ENCODE measurements at regions of chr1 and their contacts with region 1.

Region 1: DNA sequence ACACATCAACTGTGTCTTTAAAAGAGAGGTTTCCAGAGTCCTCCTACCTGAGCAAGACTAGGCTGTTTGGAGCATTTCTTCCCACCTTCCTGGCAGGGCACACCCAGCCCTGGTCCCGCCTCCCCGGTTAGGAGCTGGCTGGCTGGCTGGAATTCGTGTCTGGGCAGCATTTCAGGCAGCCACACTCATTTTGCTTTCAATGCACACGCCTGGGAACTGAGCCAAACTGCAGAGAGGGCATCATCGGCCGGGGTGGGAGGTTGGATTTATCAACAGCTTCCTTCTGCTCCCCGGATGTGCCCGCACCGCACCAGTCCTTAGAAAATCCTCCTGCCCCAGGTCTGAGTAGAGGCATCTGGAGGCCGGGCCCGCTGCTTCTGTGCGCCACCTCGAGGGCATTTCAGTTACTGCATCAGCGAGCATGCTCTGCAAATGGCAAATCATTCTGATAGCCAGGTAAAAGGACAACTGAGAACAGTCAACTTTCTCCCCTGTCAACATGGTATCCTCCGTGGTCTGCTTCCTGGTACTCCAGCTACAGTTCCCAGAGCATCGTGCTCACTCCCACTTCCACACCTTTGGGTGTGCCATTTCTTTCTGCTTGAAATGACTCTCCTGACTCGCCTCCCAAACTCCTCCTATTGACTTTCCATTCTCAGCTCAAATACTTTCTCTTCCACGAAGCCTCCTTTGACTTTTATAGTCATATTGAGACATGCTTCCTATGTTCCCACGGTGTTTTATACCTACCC is 20.6 kb downstream of the TCEA3 start:
- DNase-seq: peak; percentile 100
- H3K4me3 Mint-ChIP-seq: peak overlapping the region; percentile 63
- H3K27ac Mint-ChIP-seq: peak overlapping the region; percentile 64
- H3K4me1 Mint-ChIP-seq: peaks cover 31% of the 10 kb centered on the region
- H3K27me3 Mint-ChIP-seq: no peaks in the 10 kb centered on the region
- CTCF ChIP-seq: peak; percentile 90

Region 2: GRCh38 chr1:23098463-23099170 is 305.3 kb before region 1 on chr1:
- CTCF ChIA-PET with region 1: interaction called, 5 read pairs
- POLR2A ChIA-PET with region 1: no interaction called
- intact Hi-C with region 1: loop called (anchors 10 kb)
- DNase-seq: peak; percentile 84
- H3K4me3 Mint-ChIP-seq: no peak overlapping the region
- H3K27ac Mint-ChIP-seq: peak overlapping the region; percentile 18
- H3K4me1 Mint-ChIP-seq: peaks cover 68% of the 10 kb centered on the region
- H3K27me3 Mint-ChIP-seq: no peaks in the 10 kb centered on the region
- CTCF ChIP-seq: peak; percentile 91

Region 3: GRCh38 chr1:23242414-23242813 is 161.5 kb before region 1 on chr1:
- CTCF ChIA-PET with region 1: no interaction called
- POLR2A ChIA-PET with region 1: no interaction called
- intact Hi-C with region 1: no loop called
- DNase-seq: peak; percentile 20
- H3K4me3 Mint-ChIP-seq: no peak overlapping the region
- H3K27ac Mint-ChIP-seq: no peak overlapping the region
- H3K4me1 Mint-ChIP-seq: no peaks in the 10 kb centered on the region
- H3K27me3 Mint-ChIP-seq: no peaks in the 10 kb centered on the region
- CTCF ChIP-seq: no peak

Region 4: GRCh38 chr1:23344111-23344986 is 59.6 kb before region 1 on chr1 and contains the start of gene HNRNPR:
- CTCF ChIA-PET with region 1: interaction called, 21 read pairs
- POLR2A ChIA-PET with region 1: interaction called, 113 read pairs
- intact Hi-C with region 1: loop called (anchors 1 kb)
- DNase-seq: peak; percentile 100
- H3K4me3 Mint-ChIP-seq: peak within 1 kb of the TSS; percentile 77
- H3K27ac Mint-ChIP-seq: peak within 1 kb of the TSS; percentile 76
- H3K4me1 Mint-ChIP-seq: peaks cover 36% of the 10 kb centered on the region
- H3K27me3 Mint-ChIP-seq: no peaks in the 10 kb centered on the region
- CTCF ChIP-seq: no peak
- total RNA-seq, gene HNRNPR: 128 and 152 TPM in 2 replicates

Region 5: GRCh38 chr1:23367791-23368561 is 35.9 kb before region 1 on chr1:
- CTCF ChIA-PET with region 1: interaction called, 41 read pairs
- POLR2A ChIA-PET with region 1: interaction called, 247 read pairs
- intact Hi-C with region 1: loop called (anchors 1 kb)
- DNase-seq: peak; percentile 99
- H3K4me3 Mint-ChIP-seq: peak overlapping the region; percentile 87
- H3K27ac Mint-ChIP-seq: peak overlapping the region; percentile 94
- H3K4me1 Mint-ChIP-seq: peaks cover 28% of the 10 kb centered on the region
- H3K27me3 Mint-ChIP-seq: no peaks in the 10 kb centered on the region
- CTCF ChIP-seq: no peak

Region 6: DNA sequence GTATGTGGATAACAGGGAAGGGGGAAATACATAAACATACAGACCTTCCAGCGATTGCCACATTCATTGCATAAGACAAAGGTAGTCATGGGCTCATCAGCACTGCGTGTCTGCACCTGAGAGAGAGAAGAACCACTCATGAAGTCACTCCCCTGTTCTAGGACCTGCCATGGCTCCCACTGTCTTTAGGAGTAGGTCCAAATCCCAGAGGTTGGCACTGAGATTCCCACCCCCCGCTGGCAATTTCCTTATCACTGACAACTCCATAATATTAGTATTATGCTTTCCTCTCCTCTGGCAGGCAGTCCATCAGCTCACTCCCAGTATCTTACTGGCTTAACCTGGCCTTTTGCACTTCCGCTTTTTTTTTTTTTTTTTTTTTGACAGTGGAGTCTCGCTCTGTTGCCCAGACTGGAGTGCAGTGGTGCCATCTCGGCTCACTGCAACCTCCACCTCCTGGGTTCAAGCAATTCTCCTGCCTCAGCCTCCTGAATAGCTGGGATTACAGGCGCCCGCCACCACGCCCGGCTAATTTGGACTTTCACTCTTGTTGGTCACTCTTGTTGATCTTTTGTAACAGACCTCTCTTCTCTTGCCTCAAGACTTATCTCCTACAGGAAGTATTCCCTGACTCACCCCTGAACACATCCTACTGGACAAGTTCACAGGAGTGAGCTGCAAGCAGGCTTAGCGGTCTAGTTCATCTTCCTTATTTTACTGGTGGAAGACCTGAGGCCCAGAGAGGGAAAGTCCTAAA is 19.4 kb before region 1 on chr1:
- CTCF ChIA-PET with region 1: interaction called, 15 read pairs
- POLR2A ChIA-PET with region 1: interaction called, 65 read pairs
- intact Hi-C with region 1: no loop called
- DNase-seq: peak; percentile 86
- H3K4me3 Mint-ChIP-seq: peak overlapping the region; percentile 18
- H3K27ac Mint-ChIP-seq: no peak overlapping the region
- H3K4me1 Mint-ChIP-seq: peaks cover 19% of the 10 kb centered on the region
- H3K27me3 Mint-ChIP-seq: no peaks in the 10 kb centered on the region
- CTCF ChIP-seq: no peak

Region 7: DNA sequence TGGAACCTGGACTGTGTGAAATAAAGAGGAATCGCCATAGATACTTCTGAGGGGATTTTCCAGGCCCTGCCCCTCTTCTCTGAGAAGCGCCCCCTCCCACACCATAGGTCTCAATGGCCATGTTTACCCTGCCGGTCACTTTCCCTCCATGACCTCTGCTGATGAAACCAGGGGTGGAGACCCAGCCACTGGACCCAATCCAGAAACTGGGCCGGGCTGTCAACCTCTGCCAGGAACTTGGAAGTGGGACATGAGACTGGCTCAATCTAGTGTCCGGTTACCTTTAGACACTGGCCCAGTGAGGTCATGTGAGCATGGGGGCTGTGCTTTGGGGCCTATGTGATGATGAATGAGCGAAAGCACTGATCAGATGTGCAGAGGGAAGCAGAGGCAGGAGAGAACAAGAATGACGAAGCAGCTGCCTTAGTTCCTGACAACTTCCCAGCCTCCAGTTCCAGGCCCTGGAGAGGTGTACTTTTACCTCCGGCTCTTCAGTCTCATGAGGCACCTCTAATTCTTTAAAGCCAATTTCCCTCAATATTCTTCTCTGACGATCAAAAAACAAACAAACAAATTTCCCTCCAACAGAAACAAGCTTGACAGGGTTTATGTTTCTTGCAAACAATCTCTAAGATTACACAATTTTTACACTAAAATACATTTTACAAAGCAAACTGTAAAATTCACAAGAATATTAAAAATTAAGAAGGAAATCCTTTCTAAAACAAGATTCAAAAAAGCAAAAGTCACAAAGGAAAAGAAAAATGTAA is 75.2 kb after region 1 on chr1:
- CTCF ChIA-PET with region 1: interaction called, 3 read pairs
- POLR2A ChIA-PET with region 1: interaction called, 14 read pairs
- intact Hi-C with region 1: loop called (anchors 5 kb)
- DNase-seq: peak; percentile 94
- H3K4me3 Mint-ChIP-seq: peak overlapping the region; percentile 56
- H3K27ac Mint-ChIP-seq: peak overlapping the region; percentile 93
- H3K4me1 Mint-ChIP-seq: peaks cover 46% of the 10 kb centered on the region
- H3K27me3 Mint-ChIP-seq: no peaks in the 10 kb centered on the region
- CTCF ChIP-seq: no peak

Measured in MCF 10A (cell line).